Activated naive CD4-positive, alpha-beta T cell treated with anti-CD3 and anti-CD28 coated beads for 36 hours (primary cell): ENCODE measurements at regions of chr15 and their contacts with region 1.

Region 1: GRCh38 chr15:65869127-65869953 is at the start of gene RAB11A:
- DNase-seq: peak; percentile 95
- H3K4me3 Mint-ChIP-seq: peak within 1 kb of the TSS; percentile 99
- H3K27ac Mint-ChIP-seq: peak within 1 kb of the TSS; percentile 95
- H3K4me1 Mint-ChIP-seq: peaks cover 26% of the 10 kb centered on the region
- H3K27me3 Mint-ChIP-seq: peaks cover 4% of the 10 kb centered on the region
- total RNA-seq, gene RAB11A: 151 to 157 TPM

Region 2: GRCh38 chr15:65610871-65611718 is 258.2 kb before region 1 on chr15 and contains the start of gene INTS14:
- CTCF ChIA-PET with region 1: no interaction called
- intact Hi-C with region 1: loop called (anchors 1 kb)
- DNase-seq: peak; percentile 98
- H3K4me3 Mint-ChIP-seq: peak within 1 kb of the TSS; percentile 98
- H3K27ac Mint-ChIP-seq: peak within 1 kb of the TSS; percentile 96
- H3K4me1 Mint-ChIP-seq: peaks cover 45% of the 10 kb centered on the region
- H3K27me3 Mint-ChIP-seq: no peaks in the 10 kb centered on the region
- total RNA-seq, gene INTS14: 41.2 to 43.4 TPM

Region 3: GRCh38 chr15:65816441-65816840 is 52.9 kb before region 1 on chr15:
- CTCF ChIA-PET with region 1: no interaction called
- intact Hi-C with region 1: no loop called
- DNase-seq: no peak
- H3K4me3 Mint-ChIP-seq: no peak overlapping the region
- H3K27ac Mint-ChIP-seq: no peak overlapping the region
- H3K4me1 Mint-ChIP-seq: peaks cover 46% of the 10 kb centered on the region
- H3K27me3 Mint-ChIP-seq: no peaks in the 10 kb centered on the region

Region 4: DNA sequence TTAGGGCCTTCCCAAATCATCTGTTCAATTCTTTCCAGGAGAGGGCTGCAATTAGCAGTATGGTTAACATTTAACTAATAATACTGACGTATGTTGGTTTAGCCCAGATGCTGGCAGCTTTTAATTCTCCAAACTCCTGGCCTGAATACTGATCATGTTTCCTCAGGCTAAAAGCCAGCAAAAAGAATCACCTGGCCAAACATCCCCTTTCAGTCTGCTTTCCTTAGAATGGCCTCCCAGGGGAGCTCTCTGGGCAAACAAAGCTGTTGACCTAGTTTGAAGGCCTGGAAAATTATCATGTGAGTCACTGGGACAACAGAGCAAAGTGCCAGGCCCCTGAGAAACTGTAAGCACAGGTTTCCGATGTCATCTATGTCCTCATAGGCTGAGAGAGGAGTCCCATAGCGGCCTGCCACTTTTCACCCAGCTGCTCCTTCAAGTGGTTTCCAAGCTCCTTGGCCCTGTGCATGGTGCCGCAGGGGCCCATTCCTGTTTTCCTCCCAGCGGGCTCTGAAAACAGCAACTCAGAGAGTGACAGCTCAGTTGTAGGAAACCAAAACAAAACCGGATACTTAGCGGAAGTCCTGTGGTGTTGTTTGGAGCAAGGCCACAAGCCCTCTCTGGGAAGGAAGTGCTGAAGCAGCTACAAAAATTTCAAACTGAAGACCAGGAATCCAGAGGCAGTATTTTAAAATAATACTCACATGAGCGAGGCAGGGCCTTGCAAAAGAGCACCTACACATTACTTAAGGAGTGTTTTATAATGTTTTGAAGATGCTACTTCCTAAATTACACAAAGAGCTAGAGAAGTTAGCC is 36.6 kb before region 1 on chr15:
- CTCF ChIA-PET with region 1: interaction called, 3 read pairs
- intact Hi-C with region 1: loop called (anchors 2 kb)
- DNase-seq: peak; percentile 73
- H3K4me3 Mint-ChIP-seq: peak overlapping the region; percentile 40
- H3K27ac Mint-ChIP-seq: peak overlapping the region; percentile 81
- H3K4me1 Mint-ChIP-seq: peaks cover 45% of the 10 kb centered on the region
- H3K27me3 Mint-ChIP-seq: no peaks in the 10 kb centered on the region

Region 5: GRCh38 chr15:65887565-65887964 is 18.2 kb after region 1 on chr15:
- CTCF ChIA-PET with region 1: interaction called, 5 read pairs
- intact Hi-C with region 1: loop called (anchors 1 kb)
- DNase-seq: peak; percentile 79
- H3K4me3 Mint-ChIP-seq: peak overlapping the region; percentile 32
- H3K27ac Mint-ChIP-seq: peak overlapping the region; percentile 81
- H3K4me1 Mint-ChIP-seq: peaks cover 81% of the 10 kb centered on the region
- H3K27me3 Mint-ChIP-seq: no peaks in the 10 kb centered on the region

Region 6: GRCh38 chr15:66293419-66294156 is 424.2 kb after region 1 on chr15 and contains the start of gene DIS3L:
- CTCF ChIA-PET with region 1: no interaction called
- intact Hi-C with region 1: loop called (anchors 5 kb)
- DNase-seq: peak; percentile 66
- H3K4me3 Mint-ChIP-seq: peak within 1 kb of the TSS; percentile 84
- H3K27ac Mint-ChIP-seq: peak within 1 kb of the TSS; percentile 92
- H3K4me1 Mint-ChIP-seq: peaks cover 38% of the 10 kb centered on the region
- H3K27me3 Mint-ChIP-seq: no peaks in the 10 kb centered on the region
- total RNA-seq, gene DIS3L: 24.0 to 24.6 TPM